ENCODE measurements at regions of chr1 and their contacts with region 1.

Region 1: GRCh38 chr1:110674337-110675059 is at the start of gene KCNA3:
- DNase-seq: peak; percentile 67 to 79 (median 69)
- H3K4me3 ChIP-seq: peak within 1 kb of the TSS; percentile 73 to 78
- H3K4me3 Mint-ChIP-seq: peak within 1 kb of the TSS; percentile 84 to 100 (median 100)
- H3K27ac ChIP-seq: peak within 1 kb of the TSS; percentile 91
- H3K27ac Mint-ChIP-seq: peak within 1 kb of the TSS; percentile 76 to 100 (median 99)
- H3K4me1 ChIP-seq: peaks cover 38% of the 10 kb centered on the region
- H3K4me1 Mint-ChIP-seq: peaks cover 28 to 79% (median 38%) of the 10 kb centered on the region in 4 donors
- H3K27me3 ChIP-seq: no peaks in the 10 kb centered on the region
- H3K27me3 Mint-ChIP-seq: no peaks in the 10 kb centered on the region
- total RNA-seq, gene KCNA3: 124 TPM

Region 2: DNA sequence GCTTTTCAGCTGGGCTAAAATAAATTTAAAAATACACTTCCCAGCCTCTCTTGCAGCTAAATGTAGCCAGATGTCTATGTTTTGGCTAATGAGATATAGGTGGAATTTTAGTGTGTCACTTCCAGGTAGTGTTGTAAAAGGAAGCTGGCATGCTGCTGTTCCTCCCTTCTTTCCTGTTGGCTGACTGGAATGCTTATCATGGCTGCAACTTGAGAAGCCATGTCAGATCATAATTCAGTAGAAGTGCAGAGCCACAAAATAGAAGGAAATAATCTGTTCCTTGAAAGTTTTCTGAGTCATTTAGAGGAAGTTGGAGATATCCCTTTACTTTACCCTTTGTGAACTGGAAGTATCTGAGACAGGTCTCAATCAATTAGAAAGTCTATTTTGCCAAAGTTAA is 346.2 kb before region 1 on chr1:
- CTCF ChIA-PET with region 1: no interaction called
- POLR2A ChIA-PET with region 1: no interaction called
- intact Hi-C with region 1: no loop called
- DNase-seq: no peak
- H3K4me3 ChIP-seq: no peak overlapping the region
- H3K4me3 Mint-ChIP-seq: no peak overlapping the region
- H3K27ac ChIP-seq: no peak overlapping the region
- H3K27ac Mint-ChIP-seq: no peak overlapping the region
- H3K4me1 ChIP-seq: no peaks in the 10 kb centered on the region
- H3K4me1 Mint-ChIP-seq: no peaks in the 10 kb centered on the region
- H3K27me3 ChIP-seq: no peaks in the 10 kb centered on the region
- H3K27me3 Mint-ChIP-seq: no peaks in the 10 kb centered on the region

Region 3: DNA sequence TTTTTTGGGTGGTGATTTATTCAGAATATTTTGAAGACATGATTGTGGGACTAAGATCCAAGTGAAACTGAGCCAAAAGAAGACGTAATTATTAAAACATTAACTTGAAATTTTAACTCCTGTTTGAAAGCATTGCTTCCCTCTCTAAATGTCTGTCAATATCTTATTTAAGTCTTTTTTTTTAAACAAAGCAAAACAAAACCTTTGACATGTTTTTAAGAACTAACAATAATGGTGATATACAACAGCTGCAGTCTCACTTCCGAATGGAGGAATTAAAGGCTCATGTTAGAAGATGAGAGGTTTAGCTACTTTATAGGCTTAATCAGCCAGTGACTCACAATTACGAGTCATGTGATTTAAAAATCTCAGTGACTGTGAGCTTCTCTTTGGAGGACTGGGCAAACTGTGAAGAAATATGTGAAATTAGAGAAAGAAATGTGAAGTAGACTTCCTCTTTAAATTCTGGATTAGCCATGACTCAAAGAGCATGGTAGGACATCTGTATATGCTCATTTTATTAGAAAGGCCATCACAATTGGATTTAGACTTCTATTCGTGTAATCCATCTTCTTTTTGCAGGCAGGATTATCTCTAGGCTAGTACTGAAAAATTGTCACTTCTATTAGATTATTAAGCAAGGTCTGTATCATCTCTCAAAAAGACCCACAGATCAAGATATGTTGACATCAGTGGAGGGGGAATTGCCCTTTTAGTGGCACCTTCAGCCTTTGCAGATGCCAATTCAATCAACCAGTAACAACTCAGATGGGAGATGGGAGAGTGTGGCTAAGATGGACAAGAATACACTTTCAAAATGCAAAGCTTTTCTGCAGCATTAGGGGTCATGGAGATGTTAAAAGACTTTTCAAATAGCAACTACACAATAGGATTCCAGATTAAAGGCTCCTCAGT is 28.4 kb before region 1 on chr1:
- CTCF ChIA-PET with region 1: interaction called, 23 read pairs
- POLR2A ChIA-PET with region 1: interaction called, 993 read pairs
- intact Hi-C with region 1: loop called (anchors 1 kb)
- DNase-seq: no peak
- H3K4me3 ChIP-seq: peak overlapping the region in 1 of 2 donors; percentile 2
- H3K4me3 Mint-ChIP-seq: peak overlapping the region in 5 of 8 donors; percentile 21 to 66 (median 44)
- H3K27ac ChIP-seq: peak overlapping the region; percentile 56
- H3K27ac Mint-ChIP-seq: peak overlapping the region in 6 of 7 donors; percentile 31 to 83 (median 62)
- H3K4me1 ChIP-seq: peaks cover 99% of the 10 kb centered on the region
- H3K4me1 Mint-ChIP-seq: peaks cover 11 to 51% (median 40%) of the 10 kb centered on the region in 4 donors
- H3K27me3 ChIP-seq: no peaks in the 10 kb centered on the region
- H3K27me3 Mint-ChIP-seq: no peaks in the 10 kb centered on the region

Region 4: GRCh38 chr1:110686188-110686587 is 11.7 kb after region 1 on chr1:
- CTCF ChIA-PET with region 1: interaction called, 14 read pairs
- POLR2A ChIA-PET with region 1: interaction called, 16 read pairs
- intact Hi-C with region 1: loop called (anchors 1 kb)
- DNase-seq: peak in 4 of 5 donors; percentile 23 to 43 (median 34)
- H3K4me3 ChIP-seq: no peak overlapping the region
- H3K4me3 Mint-ChIP-seq: no peak overlapping the region
- H3K27ac ChIP-seq: no peak overlapping the region
- H3K27ac Mint-ChIP-seq: peak overlapping the region in 2 of 7 donors; percentile 19 to 56
- H3K4me1 ChIP-seq: no peaks in the 10 kb centered on the region
- H3K4me1 Mint-ChIP-seq: peaks cover 0 to 6% (median 5%) of the 10 kb centered on the region in 4 donors
- H3K27me3 ChIP-seq: no peaks in the 10 kb centered on the region
- H3K27me3 Mint-ChIP-seq: no peaks in the 10 kb centered on the region

Region 5: DNA sequence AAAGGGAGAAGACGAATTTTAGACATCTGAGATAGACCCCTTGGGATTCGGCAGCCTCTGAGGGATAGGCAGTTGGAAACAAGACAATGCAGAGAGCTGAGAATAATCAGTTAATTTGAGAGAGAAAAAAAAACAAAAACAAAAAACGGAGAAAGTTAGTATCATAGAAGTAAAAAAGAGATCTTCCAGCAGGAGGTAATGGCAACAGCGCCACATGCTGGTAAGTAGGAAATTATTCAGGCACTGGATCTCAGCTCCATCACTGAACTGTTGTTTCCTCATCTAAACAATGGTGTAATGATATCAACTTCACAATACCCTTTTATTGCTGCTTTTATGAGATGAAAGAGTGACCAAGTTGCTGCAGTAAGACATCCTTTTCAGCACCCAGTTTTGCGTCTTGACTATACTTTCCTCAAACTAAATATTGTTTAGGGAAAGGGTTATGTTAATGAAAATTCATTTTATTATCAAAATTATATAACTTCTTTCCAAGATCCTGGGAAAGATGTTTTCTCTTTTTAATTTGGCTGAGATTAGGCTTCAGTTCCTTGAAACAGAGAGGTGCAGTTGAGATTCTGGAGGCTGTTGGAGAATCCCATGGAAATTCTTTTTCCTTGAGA is 91.6 kb after region 1 on chr1:
- CTCF ChIA-PET with region 1: interaction called, 18 read pairs
- POLR2A ChIA-PET with region 1: interaction called, 25 read pairs
- intact Hi-C with region 1: loop called (anchors 1 kb)
- DNase-seq: peak; percentile 59 to 71 (median 68)
- H3K4me3 ChIP-seq: no peak overlapping the region
- H3K4me3 Mint-ChIP-seq: no peak overlapping the region
- H3K27ac ChIP-seq: no peak overlapping the region
- H3K27ac Mint-ChIP-seq: peak overlapping the region in 1 of 7 donors; percentile 80
- H3K4me1 ChIP-seq: peaks cover 4% of the 10 kb centered on the region
- H3K4me1 Mint-ChIP-seq: peaks cover 0 to 9% (median 2%) of the 10 kb centered on the region in 4 donors
- H3K27me3 ChIP-seq: no peaks in the 10 kb centered on the region
- H3K27me3 Mint-ChIP-seq: peaks cover 12% of the 10 kb centered on the region in 2 donors

Measured in CD4-positive, alpha-beta memory T cell (primary cell).